ENCODE measurements at regions of chr15 and their contacts with region 1.

Region 1: GRCh38 chr15:25832158-25832557 is 31.0 kb downstream of the ATP10A start:
- DNase-seq: peak; percentile 75
- H3K4me3 ChIP-seq: no peak overlapping the region
- H3K27ac ChIP-seq: peak overlapping the region; percentile 37
- H3K4me1 ChIP-seq: peaks cover 32% of the 10 kb centered on the region
- CTCF ChIP-seq: no peak

Region 2: DNA sequence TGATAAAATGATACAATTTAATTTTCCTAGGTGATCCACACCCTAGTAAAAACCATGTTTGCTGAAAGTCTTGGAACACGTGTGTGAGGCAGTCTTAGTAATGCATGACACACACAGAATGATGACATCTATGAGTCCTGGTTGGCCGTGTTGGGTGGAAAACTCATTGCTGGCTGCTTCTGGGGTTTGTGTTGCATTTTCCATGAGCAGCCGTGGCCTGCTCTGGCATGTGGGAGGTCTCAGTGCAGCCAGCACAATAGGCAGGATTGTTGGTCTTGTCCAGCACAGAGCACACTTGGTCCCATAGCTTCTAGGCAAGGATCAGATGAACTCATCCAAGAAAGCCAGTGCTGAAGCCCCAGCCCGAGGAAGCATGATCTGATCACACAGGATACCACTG is 220.6 kb before region 1 on chr15:
- CTCF ChIA-PET with region 1: no interaction called
- POLR2A ChIA-PET with region 1: no interaction called
- intact Hi-C with region 1: no loop called
- DNase-seq: no peak
- H3K4me3 ChIP-seq: no peak overlapping the region
- H3K27ac ChIP-seq: no peak overlapping the region
- H3K4me1 ChIP-seq: no peaks in the 10 kb centered on the region
- CTCF ChIP-seq: no peak

Region 3: GRCh38 chr15:25852661-25853524 is 20.7 kb after region 1 on chr15:
- CTCF ChIA-PET with region 1: no interaction called
- POLR2A ChIA-PET with region 1: no interaction called
- intact Hi-C with region 1: loop called (anchors 2 kb)
- DNase-seq: peak; percentile 79
- H3K4me3 ChIP-seq: peak overlapping the region; percentile 20
- H3K27ac ChIP-seq: no peak overlapping the region
- H3K4me1 ChIP-seq: peaks cover 56% of the 10 kb centered on the region
- CTCF ChIP-seq: peak; percentile 44